ENCODE measurements at regions of chr13 and their contacts with region 1.

Region 1: GRCh38 chr13:40589285-40590109 is 76.9 kb downstream of the FOXO1 start:
- DNase-seq: peak; percentile 83
- ATAC-seq: peak; percentile 91
- H3K4me3 ChIP-seq: peak overlapping the region; percentile 12 to 58 (median 24)
- H3K4me3 Mint-ChIP-seq: peak overlapping the region; percentile 65
- H3K27ac ChIP-seq: peak overlapping the region; percentile 85 to 95
- H3K27ac Mint-ChIP-seq: peak overlapping the region; percentile 89
- H3K4me1 ChIP-seq: peaks cover 91 to 98% of the 10 kb centered on the region in 2 donors
- H3K4me1 Mint-ChIP-seq: peaks cover 94% of the 10 kb centered on the region
- H3K27me3 ChIP-seq: no peaks in the 10 kb centered on the region
- H3K27me3 Mint-ChIP-seq: no peaks in the 10 kb centered on the region
- CTCF ChIP-seq: no peak

Region 2: DNA sequence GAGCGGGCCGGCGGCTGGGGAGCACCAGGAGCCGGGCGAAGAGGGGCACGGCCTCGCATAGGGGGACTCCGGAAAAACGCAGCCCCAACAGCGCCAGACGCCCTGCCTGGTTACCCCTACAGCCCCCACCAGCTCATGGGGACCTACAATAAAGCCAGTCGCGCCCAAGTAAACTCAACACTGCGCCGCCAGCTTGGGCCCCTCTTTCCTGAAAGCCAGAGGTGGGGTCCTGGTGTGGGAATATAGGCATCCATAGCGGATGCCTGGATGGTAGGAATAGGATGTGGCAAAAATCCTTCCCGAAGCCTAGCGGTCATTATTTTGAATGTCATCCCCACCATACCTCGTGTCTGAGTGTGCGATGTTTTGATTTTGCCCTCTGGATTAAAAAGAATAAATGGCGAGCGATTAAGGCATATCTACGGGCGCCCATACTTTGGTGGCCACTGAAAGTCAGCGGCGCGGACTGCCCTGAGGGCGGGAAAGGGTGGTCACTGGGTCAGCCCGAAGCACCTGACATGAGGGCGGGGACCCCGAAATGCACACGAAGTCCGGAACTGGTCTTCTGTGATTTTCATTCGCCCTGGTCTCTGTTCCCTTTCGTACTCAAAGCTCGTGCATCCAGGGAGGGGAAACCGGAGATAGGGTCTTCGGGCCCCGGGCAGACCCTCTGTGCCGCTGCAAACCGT is 1551.5 kb before region 1 on chr13 and contains the starts of genes NHLRC3 and PROSER1:
- CTCF ChIA-PET with region 1: no interaction called
- POLR2A ChIA-PET with region 1: no interaction called
- intact Hi-C with region 1: loop called (anchors 10 kb)
- DNase-seq: peak; percentile 92
- ATAC-seq: peak; percentile 84
- H3K4me3 ChIP-seq: peak within 1 kb of the TSS; percentile 67 to 99 (median 90)
- H3K4me3 Mint-ChIP-seq: peak within 1 kb of the TSS; percentile 92
- H3K27ac ChIP-seq: peak within 1 kb of the TSS; percentile 81 to 95
- H3K27ac Mint-ChIP-seq: peak within 1 kb of the TSS; percentile 100
- H3K4me1 ChIP-seq: peaks cover 30 to 35% of the 10 kb centered on the region in 2 donors
- H3K4me1 Mint-ChIP-seq: peaks cover 55% of the 10 kb centered on the region
- H3K27me3 ChIP-seq: no peaks in the 10 kb centered on the region
- H3K27me3 Mint-ChIP-seq: no peaks in the 10 kb centered on the region
- CTCF ChIP-seq: no peak
- total RNA-seq, gene NHLRC3: 38.8 and 41.9 TPM in 2 replicates
- total RNA-seq, gene PROSER1: 63.5 and 64.0 TPM in 2 replicates

Region 3: GRCh38 chr13:40564342-40565001 is 25.0 kb before region 1 on chr13:
- CTCF ChIA-PET with region 1: no interaction called
- POLR2A ChIA-PET with region 1: interaction called, 3 read pairs
- intact Hi-C with region 1: loop called (anchors 2 kb)
- DNase-seq: peak; percentile 81
- ATAC-seq: peak; percentile 32
- H3K4me3 ChIP-seq: peak overlapping the region in 2 of 5 experiments; percentile 2 to 8
- H3K4me3 Mint-ChIP-seq: peak overlapping the region; percentile 74
- H3K27ac ChIP-seq: peak overlapping the region in 1 of 2 donors; percentile 16
- H3K27ac Mint-ChIP-seq: peak overlapping the region; percentile 39
- H3K4me1 ChIP-seq: peaks cover 70 to 82% of the 10 kb centered on the region in 2 donors
- H3K4me1 Mint-ChIP-seq: peaks cover 85% of the 10 kb centered on the region
- H3K27me3 ChIP-seq: no peaks in the 10 kb centered on the region
- H3K27me3 Mint-ChIP-seq: no peaks in the 10 kb centered on the region
- CTCF ChIP-seq: no peak

Region 4: GRCh38 chr13:40578055-40578454 is 11.4 kb before region 1 on chr13:
- CTCF ChIA-PET with region 1: interaction called, 7 read pairs
- POLR2A ChIA-PET with region 1: no interaction called
- intact Hi-C with region 1: loop called (anchors 1 kb)
- DNase-seq: no peak
- ATAC-seq: no peak
- H3K4me3 ChIP-seq: no peak overlapping the region
- H3K4me3 Mint-ChIP-seq: peak overlapping the region; percentile 42
- H3K27ac ChIP-seq: peak overlapping the region; percentile 77 to 83
- H3K27ac Mint-ChIP-seq: peak overlapping the region; percentile 77
- H3K4me1 ChIP-seq: peaks cover 93 to 94% of the 10 kb centered on the region in 2 donors
- H3K4me1 Mint-ChIP-seq: peaks cover 94% of the 10 kb centered on the region
- H3K27me3 ChIP-seq: no peaks in the 10 kb centered on the region
- H3K27me3 Mint-ChIP-seq: no peaks in the 10 kb centered on the region
- CTCF ChIP-seq: no peak

Region 5: DNA sequence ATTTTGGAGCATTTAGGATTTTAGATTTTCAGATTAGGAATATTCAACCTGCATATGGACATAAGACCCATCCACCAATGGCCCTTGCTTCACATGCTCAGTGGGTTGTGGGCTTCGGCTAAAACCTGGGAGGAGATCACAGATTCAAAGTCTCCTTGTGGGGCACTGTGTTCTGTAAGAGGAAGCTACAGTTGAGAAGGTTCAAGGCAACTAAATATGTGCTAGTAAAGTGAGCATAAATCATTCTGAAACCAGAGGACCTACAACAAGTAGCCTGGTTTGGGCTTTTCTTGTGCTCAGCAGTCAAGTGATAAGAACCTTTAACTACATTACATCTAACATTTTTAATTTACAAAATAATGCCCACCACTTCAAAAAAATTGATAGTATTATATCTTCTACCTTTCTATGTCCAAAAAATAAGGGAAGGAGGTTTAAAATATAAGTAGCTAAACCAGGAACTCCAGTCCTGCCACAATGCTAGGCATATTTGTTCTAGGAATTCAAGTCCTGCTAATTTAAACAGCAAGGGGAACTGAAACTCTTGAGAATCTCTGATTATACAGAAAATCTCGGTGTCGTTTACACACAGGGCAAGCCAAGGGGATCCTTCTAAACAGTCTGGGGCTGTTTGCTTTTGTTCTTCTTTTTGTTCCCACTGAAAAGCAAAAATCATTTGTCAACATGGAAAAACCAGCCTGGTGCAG is 40.3 kb after region 1 on chr13:
- CTCF ChIA-PET with region 1: no interaction called
- POLR2A ChIA-PET with region 1: interaction called, 3 read pairs
- intact Hi-C with region 1: loop called (anchors 5 kb)
- DNase-seq: peak; percentile 68
- ATAC-seq: peak; percentile 73
- H3K4me3 ChIP-seq: peak overlapping the region in 2 of 5 experiments; percentile 6 to 37
- H3K4me3 Mint-ChIP-seq: peak overlapping the region; percentile 66
- H3K27ac ChIP-seq: peak overlapping the region; percentile 74 to 80
- H3K27ac Mint-ChIP-seq: peak overlapping the region; percentile 80
- H3K4me1 ChIP-seq: peaks cover 69 to 76% of the 10 kb centered on the region in 2 donors
- H3K4me1 Mint-ChIP-seq: peaks cover 80% of the 10 kb centered on the region
- H3K27me3 ChIP-seq: no peaks in the 10 kb centered on the region
- H3K27me3 Mint-ChIP-seq: no peaks in the 10 kb centered on the region
- CTCF ChIP-seq: no peak

Region 6: GRCh38 chr13:40653527-40654318 is 64.2 kb after region 1 on chr13:
- CTCF ChIA-PET with region 1: interaction called, 4 read pairs
- POLR2A ChIA-PET with region 1: interaction called, 4 read pairs
- intact Hi-C with region 1: loop called (anchors 5 kb)
- DNase-seq: no peak
- ATAC-seq: peak; percentile 11
- H3K4me3 ChIP-seq: peak overlapping the region in 2 of 5 experiments; percentile 51 to 58
- H3K4me3 Mint-ChIP-seq: peak overlapping the region; percentile 86
- H3K27ac ChIP-seq: peak overlapping the region; percentile 62 to 73
- H3K27ac Mint-ChIP-seq: peak overlapping the region; percentile 90
- H3K4me1 ChIP-seq: peaks cover 79 to 87% of the 10 kb centered on the region in 2 donors
- H3K4me1 Mint-ChIP-seq: peaks cover 92% of the 10 kb centered on the region
- H3K27me3 ChIP-seq: no peaks in the 10 kb centered on the region
- H3K27me3 Mint-ChIP-seq: no peaks in the 10 kb centered on the region
- CTCF ChIP-seq: no peak

Region 7: GRCh38 chr13:41299316-41300094 is 710.0 kb after region 1 on chr13:
- CTCF ChIA-PET with region 1: no interaction called
- POLR2A ChIA-PET with region 1: no interaction called
- intact Hi-C with region 1: no loop called
- DNase-seq: no peak
- ATAC-seq: no peak
- H3K4me3 ChIP-seq: no peak overlapping the region
- H3K4me3 Mint-ChIP-seq: no peak overlapping the region
- H3K27ac ChIP-seq: no peak overlapping the region
- H3K27ac Mint-ChIP-seq: no peak overlapping the region
- H3K4me1 ChIP-seq: no peaks in the 10 kb centered on the region
- H3K4me1 Mint-ChIP-seq: peaks cover 2% of the 10 kb centered on the region
- H3K27me3 ChIP-seq: no peaks in the 10 kb centered on the region
- H3K27me3 Mint-ChIP-seq: no peaks in the 10 kb centered on the region
- CTCF ChIP-seq: no peak